Mammary epithelial cell (primary cell): ENCODE measurements at regions of chr2 and their contacts with region 1.

Region 1: GRCh38 chr2:11778923-11779757 is 32.7 kb downstream of the LPIN1 start:
- DNase-seq: peak; percentile 31
- H3K4me3 ChIP-seq: no peak overlapping the region
- H3K27ac ChIP-seq: no peak overlapping the region
- H3K4me1 ChIP-seq: peaks cover 11% of the 10 kb centered on the region
- H3K27me3 ChIP-seq: no peaks in the 10 kb centered on the region
- CTCF ChIP-seq: peak; percentile 75 to 96

Region 2: DNA sequence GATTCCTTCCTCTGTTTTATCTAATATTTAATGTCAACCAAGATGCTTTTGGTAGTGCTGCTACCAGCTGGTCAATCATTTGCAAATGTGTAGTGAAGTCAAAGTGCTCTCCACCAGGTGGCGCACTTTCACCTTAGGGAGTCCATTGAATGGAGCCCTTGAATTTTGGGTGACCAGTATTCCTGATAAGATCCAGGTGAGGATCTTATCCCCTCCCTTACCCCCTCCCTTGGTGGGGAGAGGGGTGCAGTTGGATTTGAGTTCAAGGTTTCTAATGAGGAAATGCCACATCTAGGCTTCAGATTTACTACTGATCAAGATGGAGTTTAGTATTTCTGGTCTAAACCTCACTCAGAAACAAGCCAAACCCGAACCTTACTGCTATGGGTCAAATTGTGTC is 301.1 kb before region 1 on chr2:
- CTCF ChIA-PET with region 1: no interaction called
- dilution Hi-C with region 1: no loop called
- in situ Hi-C with region 1: no loop called
- intact Hi-C with region 1: loop called (anchors 5 kb)
- DNase-seq: peak; percentile 64
- H3K4me3 ChIP-seq: no peak overlapping the region
- H3K27ac ChIP-seq: no peak overlapping the region
- H3K4me1 ChIP-seq: peaks cover 5% of the 10 kb centered on the region
- H3K27me3 ChIP-seq: peaks cover 10% of the 10 kb centered on the region
- CTCF ChIP-seq: peak; percentile 73 to 87

Region 3: GRCh38 chr2:11652553-11652952 is 126.6 kb before region 1 on chr2:
- CTCF ChIA-PET with region 1: no interaction called
- dilution Hi-C with region 1: no loop called
- in situ Hi-C with region 1: no loop called
- intact Hi-C with region 1: no loop called
- DNase-seq: no peak
- H3K4me3 ChIP-seq: no peak overlapping the region
- H3K27ac ChIP-seq: no peak overlapping the region
- H3K4me1 ChIP-seq: no peaks in the 10 kb centered on the region
- H3K27me3 ChIP-seq: peaks cover 4% of the 10 kb centered on the region
- CTCF ChIP-seq: no peak

Region 4: GRCh38 chr2:11688222-11689069 is 90.7 kb before region 1 on chr2:
- CTCF ChIA-PET with region 1: interaction called, 16 read pairs
- dilution Hi-C with region 1: no loop called
- in situ Hi-C with region 1: loop called (anchors 5 kb)
- intact Hi-C with region 1: loop called (anchors 1 kb)
- DNase-seq: peak; percentile 65
- H3K4me3 ChIP-seq: peak overlapping the region; percentile 13 to 27 (median 23)
- H3K27ac ChIP-seq: no peak overlapping the region
- H3K4me1 ChIP-seq: peaks cover 14% of the 10 kb centered on the region
- H3K27me3 ChIP-seq: peaks cover 3% of the 10 kb centered on the region
- CTCF ChIP-seq: peak; percentile 82 to 90

Region 5: DNA sequence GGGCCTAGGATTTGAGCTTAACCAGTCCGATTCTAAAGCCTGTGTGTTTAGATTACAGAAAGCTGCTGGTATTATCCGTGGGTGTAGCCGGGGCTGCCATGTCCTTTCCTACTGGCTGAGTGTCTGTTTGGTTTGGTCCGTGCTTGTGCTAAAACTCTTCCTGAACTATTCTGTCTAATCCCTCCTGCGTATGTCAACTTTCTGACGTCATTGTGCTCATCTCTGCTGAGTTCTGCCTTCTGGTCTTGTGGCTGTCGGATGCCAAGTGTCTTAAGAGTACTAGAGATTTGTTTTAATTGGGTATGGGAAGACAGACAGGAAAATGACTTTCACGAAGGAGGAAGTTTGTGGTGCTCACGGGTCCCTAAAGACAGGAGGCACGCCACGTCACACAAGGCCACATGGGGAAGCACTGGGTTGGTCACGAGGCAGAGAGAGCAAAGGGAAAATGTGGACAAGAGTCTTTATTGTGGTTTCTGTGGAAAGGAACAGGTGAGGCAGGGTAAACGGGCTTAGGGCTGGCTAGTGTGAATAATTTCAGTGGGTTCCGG is 77.3 kb before region 1 on chr2:
- CTCF ChIA-PET with region 1: interaction called, 3 read pairs
- dilution Hi-C with region 1: loop called (anchors 5 kb)
- in situ Hi-C with region 1: no loop called
- intact Hi-C with region 1: no loop called
- DNase-seq: no peak
- H3K4me3 ChIP-seq: no peak overlapping the region
- H3K27ac ChIP-seq: no peak overlapping the region
- H3K4me1 ChIP-seq: peaks cover 19% of the 10 kb centered on the region
- H3K27me3 ChIP-seq: no peaks in the 10 kb centered on the region
- CTCF ChIP-seq: no peak

Region 6: DNA sequence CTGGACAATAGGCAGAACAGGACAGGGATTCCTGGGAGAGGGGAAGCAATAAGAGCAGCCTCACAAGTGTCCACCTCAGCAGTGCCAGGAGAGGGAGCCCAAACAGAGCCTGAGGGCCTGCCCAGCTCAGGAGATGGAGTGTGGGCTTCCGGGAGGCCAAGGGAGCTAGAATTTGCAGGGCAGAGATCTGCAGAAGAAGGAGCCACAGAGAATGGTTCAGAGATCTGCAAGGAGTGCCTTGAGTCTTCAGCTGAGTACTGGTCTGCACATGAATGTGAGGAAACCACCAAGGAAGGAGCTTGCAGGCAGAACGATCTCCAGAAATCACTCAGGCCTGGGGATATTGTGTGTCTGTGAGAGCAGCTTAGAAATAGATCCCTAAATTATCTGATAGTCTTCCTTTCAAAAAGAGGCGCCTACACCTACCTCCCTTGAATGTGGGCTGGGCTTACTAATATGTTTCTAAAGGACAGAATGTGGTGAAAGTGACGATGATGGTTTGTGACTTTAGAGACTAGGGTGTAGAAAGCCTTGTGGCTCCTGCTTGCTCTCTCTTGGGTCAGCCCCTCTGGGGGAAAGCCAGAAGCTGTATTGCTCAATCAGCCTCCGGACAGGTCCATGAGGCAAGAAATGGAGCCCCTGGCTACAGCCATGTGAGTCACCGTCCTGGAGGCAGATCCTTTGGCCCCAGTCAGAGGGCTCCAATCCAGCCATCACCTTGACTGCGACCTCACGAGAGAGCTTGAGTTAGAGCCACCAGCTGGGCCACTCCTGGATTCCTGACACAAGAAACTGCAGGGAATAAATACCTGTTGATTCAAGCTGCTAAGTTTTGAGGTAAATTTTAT is 40.3 kb before region 1 on chr2:
- CTCF ChIA-PET with region 1: no interaction called
- dilution Hi-C with region 1: no loop called
- in situ Hi-C with region 1: no loop called
- intact Hi-C with region 1: loop called (anchors 1 kb)
- DNase-seq: peak; percentile 37
- H3K4me3 ChIP-seq: no peak overlapping the region
- H3K27ac ChIP-seq: no peak overlapping the region
- H3K4me1 ChIP-seq: peaks cover 29% of the 10 kb centered on the region
- H3K27me3 ChIP-seq: no peaks in the 10 kb centered on the region
- CTCF ChIP-seq: peak; percentile 39 to 59

Region 7: GRCh38 chr2:11743846-11744553 is 35.1 kb before region 1 on chr2:
- CTCF ChIA-PET with region 1: no interaction called
- dilution Hi-C with region 1: no loop called
- in situ Hi-C with region 1: no loop called
- intact Hi-C with region 1: loop called (anchors 2 kb)
- DNase-seq: peak; percentile 100
- H3K4me3 ChIP-seq: peak overlapping the region; percentile 6 to 24 (median 12)
- H3K27ac ChIP-seq: peak overlapping the region; percentile 75
- H3K4me1 ChIP-seq: peaks cover 56% of the 10 kb centered on the region
- H3K27me3 ChIP-seq: no peaks in the 10 kb centered on the region
- CTCF ChIP-seq: no peak